ENCODE measurements at regions of chr9 and their contacts with region 1.

Region 1: GRCh38 chr9:99253772-99254431 is 31.8 kb downstream of the SEC61B start:
- DNase-seq: peak; percentile 98
- ATAC-seq: peak; percentile 82
- H3K4me3 Mint-ChIP-seq: peak overlapping the region; percentile 46
- H3K27ac Mint-ChIP-seq: peak overlapping the region; percentile 95
- H3K4me1 Mint-ChIP-seq: peaks cover 40% of the 10 kb centered on the region
- H3K27me3 Mint-ChIP-seq: peaks cover 9% of the 10 kb centered on the region
- CTCF ChIP-seq: no peak

Region 2: DNA sequence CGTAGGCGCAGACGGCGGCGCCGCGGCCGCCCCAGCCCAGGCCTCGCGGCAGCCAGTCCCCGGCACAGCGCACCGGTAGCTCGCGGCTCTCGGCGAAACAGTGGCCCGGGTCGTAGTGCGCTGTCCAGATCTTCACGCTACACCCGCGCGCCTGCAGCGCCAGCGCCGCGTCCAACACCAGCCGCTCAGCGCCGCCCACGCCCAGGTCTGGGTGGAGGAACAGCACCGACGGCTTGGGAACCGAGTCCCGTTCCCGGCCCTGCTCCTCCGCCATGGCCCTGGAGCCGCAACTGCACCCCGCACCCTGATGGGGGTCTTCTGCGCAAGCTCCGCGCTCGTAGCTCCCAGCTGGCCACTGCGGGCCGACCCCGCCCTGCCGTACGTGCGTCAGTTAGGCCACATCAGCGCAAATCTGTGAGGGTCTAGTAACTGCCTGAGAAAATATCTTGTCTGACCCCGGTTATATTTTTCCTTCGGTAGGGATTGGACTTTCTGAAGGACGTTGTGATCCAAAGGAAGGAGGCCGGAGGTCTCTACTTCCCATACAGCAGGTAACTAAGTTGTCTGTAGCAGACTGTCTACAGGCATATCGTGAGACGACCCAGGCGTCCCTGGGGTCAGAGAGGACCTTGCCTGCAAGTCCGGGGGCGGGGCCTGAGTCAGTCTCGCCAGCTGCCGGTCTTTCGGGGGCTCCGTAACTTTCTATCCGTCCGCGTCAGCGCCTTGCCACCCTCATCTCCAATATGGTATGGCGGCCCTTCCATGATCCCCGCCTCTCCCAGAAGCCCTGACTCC is 32.1 kb before region 1 on chr9 and contains the starts of genes ALG2 and SEC61B:
- CTCF ChIA-PET with region 1: interaction called, 3 read pairs
- POLR2A ChIA-PET with region 1: interaction called, 10 read pairs
- intact Hi-C with region 1: no loop called
- DNase-seq: peak; percentile 98
- ATAC-seq: peak; percentile 93
- H3K4me3 Mint-ChIP-seq: peak within 1 kb of the TSS; percentile 99
- H3K27ac Mint-ChIP-seq: peak within 1 kb of the TSS; percentile 100
- H3K4me1 Mint-ChIP-seq: peaks cover 65% of the 10 kb centered on the region
- H3K27me3 Mint-ChIP-seq: no peaks in the 10 kb centered on the region
- CTCF ChIP-seq: no peak
- total RNA-seq, gene ALG2: 24.1 to 27.0 TPM
- total RNA-seq, gene SEC61B: 140 to 149 TPM

Measured in activated CD8-positive, alpha-beta T cell treated with anti-CD3 and anti-CD28 coated beads for 36 hours (primary cell).